Activated naive CD4-positive, alpha-beta T cell treated with anti-CD3 and anti-CD28 coated beads, Interleukin-2, amount 10 ng/mL, durations not matched to agents 7 days and 5 days (primary cell): ENCODE measurements at regions of chr12 and their contacts with region 1.

Region 1: GRCh38 chr12:4107436-4107878 is 166.1 kb upstream of the CCND2 start:
- DNase-seq: peak; percentile 83
- H3K4me3 Mint-ChIP-seq: no peak overlapping the region
- H3K27ac Mint-ChIP-seq: peak overlapping the region; percentile 78
- H3K4me1 Mint-ChIP-seq: peaks cover 53% of the 10 kb centered on the region
- H3K27me3 Mint-ChIP-seq: peaks cover 4% of the 10 kb centered on the region

Region 2: DNA sequence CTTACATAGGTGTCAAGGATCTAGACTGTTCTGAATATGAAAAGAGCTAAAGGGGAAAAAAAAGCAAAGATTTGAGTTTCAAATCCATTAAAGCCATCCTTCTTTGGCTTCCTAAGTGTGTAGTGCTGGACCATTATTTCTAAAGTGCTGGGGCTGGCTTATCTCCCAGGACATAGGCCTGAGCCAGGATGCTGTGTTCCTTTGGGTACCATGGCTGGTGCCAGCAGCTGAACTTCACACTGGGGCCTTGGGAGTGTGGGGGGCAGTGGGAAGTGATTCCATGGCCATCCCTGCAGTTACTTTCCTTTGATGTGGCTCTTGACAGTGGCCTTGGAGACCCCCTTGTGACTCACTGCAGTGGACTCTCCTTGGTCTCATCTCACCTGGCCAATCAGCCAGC is 595.7 kb before region 1 on chr12:
- CTCF ChIA-PET with region 1: no interaction called
- DNase-seq: no peak
- H3K4me3 Mint-ChIP-seq: no peak overlapping the region
- H3K27ac Mint-ChIP-seq: no peak overlapping the region
- H3K4me1 Mint-ChIP-seq: no peaks in the 10 kb centered on the region
- H3K27me3 Mint-ChIP-seq: peaks cover 14% of the 10 kb centered on the region

Region 3: DNA sequence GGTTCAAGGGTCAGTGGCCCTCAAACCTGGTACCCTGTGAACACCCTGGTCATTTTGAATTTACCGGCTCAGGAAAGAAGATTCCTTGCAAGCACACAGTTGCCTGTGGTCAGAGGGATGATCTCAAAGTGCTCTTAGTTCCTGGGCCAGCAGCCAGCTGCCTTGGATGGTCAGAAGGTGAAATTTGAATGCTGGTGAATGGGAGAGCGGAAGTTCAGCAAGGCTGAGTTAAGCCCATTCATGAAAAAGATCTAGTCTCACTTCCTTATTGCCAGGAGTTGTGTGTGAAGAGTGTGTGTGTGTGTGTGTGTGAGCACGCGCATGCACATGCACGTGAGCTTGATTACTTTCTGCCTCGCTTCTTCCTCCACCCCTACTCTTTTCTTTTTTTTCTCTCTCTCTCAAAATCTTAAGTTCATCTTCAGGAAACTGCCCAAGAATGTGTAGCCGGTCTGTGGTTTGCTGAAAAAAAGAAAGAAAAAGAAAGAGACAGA is 10.6 kb after region 1 on chr12:
- CTCF ChIA-PET with region 1: interaction called, 25 read pairs
- DNase-seq: peak; percentile 44
- H3K4me3 Mint-ChIP-seq: peak overlapping the region; percentile 56
- H3K27ac Mint-ChIP-seq: peak overlapping the region; percentile 86
- H3K4me1 Mint-ChIP-seq: peaks cover 66% of the 10 kb centered on the region
- H3K27me3 Mint-ChIP-seq: peaks cover 16% of the 10 kb centered on the region

Region 4: GRCh38 chr12:4148418-4149056 is 41.1 kb after region 1 on chr12:
- CTCF ChIA-PET with region 1: interaction called, 29 read pairs
- DNase-seq: no peak
- H3K4me3 Mint-ChIP-seq: no peak overlapping the region
- H3K27ac Mint-ChIP-seq: peak overlapping the region; percentile 60
- H3K4me1 Mint-ChIP-seq: peaks cover 94% of the 10 kb centered on the region
- H3K27me3 Mint-ChIP-seq: no peaks in the 10 kb centered on the region

Region 5: GRCh38 chr12:4164559-4165558 is 57.4 kb after region 1 on chr12:
- CTCF ChIA-PET with region 1: interaction called, 13 read pairs
- DNase-seq: peak; percentile 78
- H3K4me3 Mint-ChIP-seq: peak overlapping the region; percentile 79
- H3K27ac Mint-ChIP-seq: peak overlapping the region; percentile 91
- H3K4me1 Mint-ChIP-seq: peaks cover 64% of the 10 kb centered on the region
- H3K27me3 Mint-ChIP-seq: peaks cover 3% of the 10 kb centered on the region